ENCODE measurements at regions of chr9 and their contacts with region 1.

Region 1: GRCh38 chr9:127980706-127981558 is at the start of gene EEIG1:
- DNase-seq: peak; percentile 96
- H3K4me3 Mint-ChIP-seq: peak within 1 kb of the TSS; percentile 91
- H3K27ac Mint-ChIP-seq: peak within 1 kb of the TSS; percentile 81
- H3K4me1 Mint-ChIP-seq: peaks cover 44% of the 10 kb centered on the region
- H3K27me3 Mint-ChIP-seq: no peaks in the 10 kb centered on the region
- total RNA-seq, gene EEIG1: 212 to 218 TPM

Region 2: DNA sequence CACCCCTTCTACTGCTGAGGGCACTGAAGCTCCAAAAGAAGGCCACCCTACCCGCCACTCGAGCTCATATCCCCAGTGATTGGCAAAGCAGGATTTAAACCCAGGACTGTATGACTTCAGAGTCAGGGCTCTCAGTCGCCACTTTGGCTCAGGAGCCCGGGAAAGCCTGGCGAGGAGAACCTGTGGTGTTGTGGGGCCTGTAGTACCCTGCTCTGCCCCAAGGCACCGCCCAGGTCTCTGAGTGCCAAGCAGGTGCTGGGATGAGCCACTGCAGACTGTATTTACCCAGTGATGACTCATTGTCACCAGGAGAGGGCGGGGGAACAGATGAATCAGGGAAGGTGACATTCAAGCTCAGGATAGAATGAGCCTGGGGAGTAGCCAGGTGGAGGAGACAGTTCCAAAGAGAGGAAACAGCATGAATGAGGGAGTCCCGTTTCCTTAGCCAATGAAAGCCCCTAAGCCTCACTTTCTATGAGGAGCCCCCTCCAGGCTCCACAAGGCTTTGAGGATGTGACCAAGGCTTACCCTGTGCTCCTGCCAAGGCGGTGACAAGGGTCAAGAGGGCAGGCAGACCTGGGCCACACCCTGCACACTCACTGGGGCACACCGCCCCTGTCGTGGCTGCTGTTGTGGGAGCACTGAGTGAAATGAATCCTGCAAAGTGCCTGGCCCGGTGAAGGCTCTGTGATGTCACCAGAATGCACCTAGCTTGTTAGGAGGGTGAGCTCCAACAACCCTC is 25.5 kb before region 1 on chr9:
- CTCF ChIA-PET with region 1: interaction called, 44 read pairs
- POLR2A ChIA-PET with region 1: interaction called, 47 read pairs
- DNase-seq: peak; percentile 81
- H3K4me3 Mint-ChIP-seq: peak overlapping the region; percentile 31
- H3K27ac Mint-ChIP-seq: peak overlapping the region; percentile 66
- H3K4me1 Mint-ChIP-seq: peaks cover 72% of the 10 kb centered on the region
- H3K27me3 Mint-ChIP-seq: no peaks in the 10 kb centered on the region

Region 3: GRCh38 chr9:127970401-127971313 is 10.3 kb before region 1 on chr9:
- CTCF ChIA-PET with region 1: interaction called, 7 read pairs
- POLR2A ChIA-PET with region 1: interaction called, 48 read pairs
- DNase-seq: peak; percentile 81
- H3K4me3 Mint-ChIP-seq: peak overlapping the region; percentile 74
- H3K27ac Mint-ChIP-seq: peak overlapping the region; percentile 93
- H3K4me1 Mint-ChIP-seq: peaks cover 95% of the 10 kb centered on the region
- H3K27me3 Mint-ChIP-seq: no peaks in the 10 kb centered on the region

Region 4: DNA sequence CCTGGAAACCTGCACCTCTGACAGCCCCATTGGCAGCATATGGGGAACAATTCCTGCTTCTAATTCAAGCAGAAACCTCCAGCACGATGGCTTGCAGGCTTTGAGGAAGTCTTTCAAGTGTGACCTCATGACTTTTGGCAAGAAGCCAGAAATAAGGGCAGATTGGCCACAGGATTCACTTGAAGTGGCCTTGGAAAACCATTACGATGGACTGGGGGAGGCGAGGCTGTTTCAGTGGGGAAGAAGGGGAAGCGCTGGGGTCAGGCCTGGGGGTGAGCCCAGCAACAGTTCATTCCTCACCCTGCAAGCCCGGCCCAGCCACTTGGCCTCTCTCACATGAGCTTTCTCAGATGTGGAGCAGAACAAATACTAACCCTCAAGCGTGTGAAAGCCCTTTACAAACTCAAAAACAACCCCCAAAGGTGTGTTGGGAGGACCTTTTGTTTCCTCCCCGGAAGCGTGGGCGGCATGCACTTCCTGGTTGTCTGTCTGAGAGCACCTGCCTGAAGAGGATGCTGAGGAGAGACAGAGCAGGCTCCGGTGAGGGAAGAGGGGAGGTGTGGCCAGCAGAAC is 26.7 kb after region 1 on chr9:
- CTCF ChIA-PET with region 1: interaction called, 3 read pairs
- POLR2A ChIA-PET with region 1: interaction called, 18 read pairs
- DNase-seq: peak; percentile 82
- H3K4me3 Mint-ChIP-seq: peak overlapping the region; percentile 61
- H3K27ac Mint-ChIP-seq: peak overlapping the region; percentile 89
- H3K4me1 Mint-ChIP-seq: peaks cover 43% of the 10 kb centered on the region
- H3K27me3 Mint-ChIP-seq: peaks cover 2% of the 10 kb centered on the region